ENCODE measurements at regions of chr9 and their contacts with region 1.

Region 1: DNA sequence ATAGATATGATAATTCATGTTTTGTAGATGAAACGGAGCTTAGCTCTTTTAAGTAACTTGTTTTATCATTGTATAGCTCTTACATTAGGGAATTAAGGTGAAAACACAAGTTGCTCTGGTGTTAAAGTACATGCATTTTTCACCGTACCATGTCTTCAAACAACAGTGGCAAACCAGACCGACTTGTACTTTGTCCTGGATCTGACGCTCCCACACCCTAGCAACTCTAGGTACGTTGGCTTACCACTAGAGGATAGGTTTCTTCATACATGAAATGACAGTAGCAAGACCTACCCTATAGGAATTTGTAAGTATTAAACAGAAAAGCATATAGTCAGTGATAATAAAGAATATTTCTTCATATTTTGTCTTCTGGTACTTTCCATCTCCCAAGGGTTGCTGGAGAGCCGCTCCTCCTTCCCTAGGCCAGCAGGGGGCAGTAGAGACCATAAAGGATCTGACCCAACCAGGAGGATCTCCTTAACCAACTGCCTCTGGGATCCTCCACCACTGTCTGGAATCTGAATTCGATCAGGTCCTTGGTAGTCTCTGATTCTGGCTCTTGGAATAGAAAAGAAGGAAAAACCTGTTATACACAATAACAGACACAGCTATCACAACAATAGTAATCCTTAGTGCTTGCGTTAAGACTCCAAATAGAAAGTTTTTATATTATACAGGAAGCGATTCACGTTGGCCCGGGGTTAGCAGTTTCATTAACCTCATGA is 136.7 kb downstream of the CAVIN4 start:
- DNase-seq: peak; percentile 30
- H3K4me3 ChIP-seq: no peak overlapping the region
- H3K27ac ChIP-seq: no peak overlapping the region
- H3K4me1 ChIP-seq: no peaks in the 10 kb centered on the region
- H3K27me3 ChIP-seq: peaks cover 62% of the 10 kb centered on the region
- CTCF ChIP-seq: peak; percentile 86

Region 2: GRCh38 chr9:100756221-100756620 is 41.7 kb after region 1 on chr9:
- intact Hi-C with region 1: no loop called
- DNase-seq: no peak
- H3K4me3 ChIP-seq: no peak overlapping the region
- H3K27ac ChIP-seq: no peak overlapping the region
- H3K4me1 ChIP-seq: no peaks in the 10 kb centered on the region
- H3K27me3 ChIP-seq: no peaks in the 10 kb centered on the region
- CTCF ChIP-seq: no peak

Region 3: DNA sequence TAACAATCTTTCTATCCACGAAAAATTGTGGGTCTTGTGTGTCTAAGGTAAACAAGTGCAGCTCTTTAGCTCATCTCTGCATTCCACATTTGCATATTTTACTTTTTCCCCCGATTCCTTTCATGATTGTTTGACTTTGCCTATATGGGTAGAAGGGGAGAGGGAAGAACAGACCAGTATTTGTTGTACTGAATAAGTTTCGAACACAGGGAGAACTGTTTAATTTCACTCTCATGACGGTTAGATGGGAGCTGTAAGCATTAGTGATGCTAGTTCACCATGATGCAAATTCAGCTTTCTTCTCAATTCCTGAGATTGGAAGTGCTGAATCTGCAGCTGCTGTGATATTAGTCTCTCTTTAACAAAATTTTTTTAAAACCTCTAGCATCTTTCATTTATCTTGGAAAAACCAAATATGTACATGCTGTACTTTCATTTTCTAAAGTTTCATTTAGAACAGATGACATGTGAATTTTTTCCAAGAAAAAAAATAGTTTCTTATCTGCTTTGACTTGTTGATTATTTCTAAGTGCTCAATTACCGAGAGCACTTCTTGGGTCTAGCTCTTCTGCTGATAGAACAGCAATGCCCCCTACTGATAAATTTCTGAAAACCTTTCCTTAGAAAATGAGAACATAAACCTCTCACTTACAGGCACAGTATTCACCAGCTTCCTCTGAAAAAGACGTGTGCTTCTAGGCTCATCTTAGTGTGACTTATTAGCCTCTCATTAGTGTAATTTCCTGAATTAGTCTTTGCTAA is 520.8 kb after region 1 on chr9:
- intact Hi-C with region 1: loop called (anchors 10 kb)
- DNase-seq: no peak
- H3K4me3 ChIP-seq: no peak overlapping the region
- H3K27ac ChIP-seq: no peak overlapping the region
- H3K4me1 ChIP-seq: no peaks in the 10 kb centered on the region
- H3K27me3 ChIP-seq: peaks cover 3% of the 10 kb centered on the region
- CTCF ChIP-seq: peak; percentile 73

Region 4: GRCh38 chr9:101311758-101312420 is 597.4 kb after region 1 on chr9:
- intact Hi-C with region 1: loop called (anchors 10 kb)
- DNase-seq: no peak
- H3K4me3 ChIP-seq: no peak overlapping the region
- H3K27ac ChIP-seq: no peak overlapping the region
- H3K4me1 ChIP-seq: no peaks in the 10 kb centered on the region
- H3K27me3 ChIP-seq: peaks cover 13% of the 10 kb centered on the region
- CTCF ChIP-seq: peak; percentile 76